Astrocyte of the cerebellum (primary cell): ENCODE measurements at regions of chr10 and their contacts with region 1.

Region 1: GRCh38 chr10:85105614-85106255 is 777.3 kb downstream of the CCSER2 start:
- DNase-seq: no peak
- H3K4me3 ChIP-seq: no peak overlapping the region
- CTCF ChIP-seq: peak; percentile 8

Region 2: GRCh38 chr10:85067955-85068354 is 37.8 kb before region 1 on chr10:
- in situ Hi-C with region 1: loop called (anchors 5 kb)
- DNase-seq: no peak
- H3K4me3 ChIP-seq: no peak overlapping the region
- CTCF ChIP-seq: no peak

Region 3: DNA sequence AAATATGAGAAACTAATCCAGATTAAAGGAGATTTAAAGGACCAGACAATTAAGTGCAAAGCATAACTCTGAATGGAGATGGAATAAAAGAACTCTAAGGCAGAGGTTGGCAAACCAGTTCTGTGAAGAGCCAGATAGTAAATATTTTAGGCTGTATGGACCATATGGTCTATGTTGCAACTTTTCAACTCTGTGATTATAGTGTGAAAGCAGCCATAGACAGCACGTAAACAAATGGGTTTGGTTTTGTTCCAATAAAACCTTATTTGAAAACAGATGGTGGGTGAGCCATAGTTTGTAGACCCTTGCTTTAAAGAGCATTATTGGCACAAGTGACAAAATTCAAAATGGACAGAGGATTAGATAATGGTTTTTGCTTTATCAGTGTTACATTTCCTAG is 106.8 kb after region 1 on chr10:
- in situ Hi-C with region 1: no loop called
- DNase-seq: no peak
- H3K4me3 ChIP-seq: no peak overlapping the region
- CTCF ChIP-seq: no peak